ENCODE measurements at regions of chr11 and their contacts with region 1.

Region 1: DNA sequence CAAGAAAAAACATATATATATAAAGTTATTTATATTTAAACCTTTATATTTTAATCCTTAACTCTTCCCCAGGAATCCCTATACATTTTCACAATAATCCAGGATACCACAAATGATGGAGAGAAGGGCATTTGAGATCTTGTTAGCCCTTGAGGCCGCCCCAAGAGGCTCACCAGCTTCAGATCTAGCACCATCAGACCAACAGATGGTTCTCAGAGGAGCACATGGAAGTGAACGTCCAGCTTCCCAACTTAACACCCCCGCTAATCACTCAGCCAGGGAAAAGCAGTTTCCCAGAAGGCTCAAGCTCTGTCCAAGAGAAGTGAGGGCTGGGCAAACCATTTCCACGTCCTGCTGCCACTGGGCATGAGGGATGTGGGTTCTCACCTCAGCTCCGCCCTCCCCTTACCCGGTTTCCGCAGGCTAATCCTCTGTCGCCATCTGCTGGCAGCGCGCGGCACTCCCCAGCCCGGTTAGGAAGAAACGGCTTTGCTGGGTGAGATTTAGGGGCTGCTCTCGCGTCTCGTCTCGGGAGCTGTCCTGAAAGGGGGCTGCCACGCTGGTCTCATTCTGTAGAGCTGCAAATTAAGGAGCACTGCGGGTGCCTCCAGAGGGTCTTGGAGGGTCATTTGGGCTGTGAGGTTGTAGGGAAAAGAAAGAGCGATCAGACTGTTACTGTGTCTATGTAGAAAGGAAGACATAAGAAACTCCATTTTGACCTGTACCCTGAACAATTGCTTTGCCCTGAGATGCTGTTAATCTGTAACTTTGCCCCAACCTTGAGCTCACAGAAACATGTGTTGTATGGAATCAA is 6.8 kb upstream of the FAM111A start:
- DNase-seq: peak; percentile 91
- H3K4me3 ChIP-seq: no peak overlapping the region
- H3K27ac ChIP-seq: no peak overlapping the region
- H3K4me1 ChIP-seq: no peaks in the 10 kb centered on the region
- H3K27me3 ChIP-seq: no peaks in the 10 kb centered on the region
- CTCF ChIP-seq: peak; percentile 99

Region 2: DNA sequence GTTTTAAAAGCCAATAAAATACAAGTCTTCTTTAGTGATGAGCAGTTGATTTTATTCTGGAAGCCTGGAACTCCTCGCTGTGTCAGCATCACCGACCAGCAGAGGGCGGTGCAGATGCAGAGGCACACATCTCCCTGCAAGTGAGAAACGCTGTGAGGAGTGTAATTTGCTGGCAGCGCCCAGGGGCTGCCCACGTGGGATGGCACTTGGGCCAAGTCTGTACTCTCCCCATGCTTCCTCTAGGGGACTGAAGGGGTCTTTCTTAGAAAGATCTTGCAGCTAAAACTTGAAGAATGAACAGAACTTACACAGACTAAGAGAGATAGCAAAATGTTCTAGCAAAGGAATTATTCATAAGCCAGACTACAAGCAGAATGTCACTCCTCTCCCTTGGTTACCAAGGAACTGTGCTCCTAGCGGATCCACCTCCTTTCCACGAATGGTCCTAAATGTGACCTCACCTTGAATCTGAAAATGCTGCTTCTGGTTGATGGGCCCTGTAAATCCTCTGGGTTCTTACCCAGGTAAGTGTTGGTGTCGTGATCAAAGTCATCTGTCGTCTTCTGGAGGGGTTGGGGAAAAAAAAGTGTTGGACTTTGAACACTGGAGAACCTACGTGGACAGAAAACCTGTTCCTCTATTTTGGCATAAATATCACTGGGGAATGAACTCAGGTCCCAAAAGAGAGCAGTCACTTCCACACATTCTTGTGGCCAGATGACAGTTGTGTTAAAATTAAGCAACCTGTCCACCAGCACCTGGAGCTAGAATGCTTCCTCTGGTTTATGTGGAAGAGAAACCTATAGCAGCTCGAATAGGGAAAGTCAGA is 481.6 kb before region 1 on chr11:
- CTCF ChIA-PET with region 1: interaction called, 6 read pairs
- POLR2A ChIA-PET with region 1: no interaction called
- intact Hi-C with region 1: loop called (anchors 5 kb)
- DNase-seq: peak; percentile 91
- H3K4me3 ChIP-seq: no peak overlapping the region
- H3K27ac ChIP-seq: no peak overlapping the region
- H3K4me1 ChIP-seq: no peaks in the 10 kb centered on the region
- H3K27me3 ChIP-seq: no peaks in the 10 kb centered on the region
- CTCF ChIP-seq: peak; percentile 98

Region 3: DNA sequence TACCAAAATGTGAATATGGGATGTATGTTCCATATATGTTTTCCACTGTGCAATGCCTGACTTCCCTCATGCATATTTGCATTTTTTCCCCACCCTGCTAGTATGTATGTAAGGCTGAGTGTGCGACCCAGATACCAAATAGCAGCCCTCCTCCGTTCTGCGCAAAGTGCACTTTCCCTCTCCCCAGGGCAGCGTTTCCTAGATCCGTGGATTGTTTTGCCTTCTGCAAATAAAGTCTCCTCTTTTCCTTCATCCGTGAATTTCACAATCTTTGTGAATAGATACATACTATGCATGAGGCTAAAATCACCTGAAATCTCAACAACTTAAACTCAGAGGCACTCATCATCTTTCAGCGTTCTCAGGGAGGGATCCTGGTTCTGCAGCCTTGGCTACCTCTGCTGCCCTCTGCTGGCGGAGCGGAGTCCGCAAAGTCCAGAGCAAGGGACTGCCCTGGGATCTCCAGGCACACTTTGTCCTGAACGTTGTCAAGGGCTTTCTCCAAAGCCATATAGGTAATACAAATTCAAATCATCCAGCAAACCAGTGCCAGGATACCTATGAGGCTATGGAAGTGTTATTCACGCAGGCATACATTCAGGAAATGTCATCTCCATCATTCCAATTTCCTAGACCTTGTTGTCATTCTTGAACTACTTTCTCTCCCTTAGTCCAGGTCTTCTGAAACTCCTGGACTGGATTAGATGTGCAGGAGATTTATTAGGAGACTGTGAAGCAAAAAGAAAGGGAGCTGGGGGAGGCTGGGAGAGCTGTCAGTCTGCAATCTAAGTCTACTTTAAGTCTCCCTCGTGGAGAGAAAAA is 460.3 kb before region 1 on chr11:
- CTCF ChIA-PET with region 1: no interaction called
- POLR2A ChIA-PET with region 1: no interaction called
- intact Hi-C with region 1: no loop called
- DNase-seq: peak; percentile 75
- H3K4me3 ChIP-seq: no peak overlapping the region
- H3K27ac ChIP-seq: no peak overlapping the region
- H3K4me1 ChIP-seq: no peaks in the 10 kb centered on the region
- H3K27me3 ChIP-seq: no peaks in the 10 kb centered on the region
- CTCF ChIP-seq: peak; percentile 99

Region 4: DNA sequence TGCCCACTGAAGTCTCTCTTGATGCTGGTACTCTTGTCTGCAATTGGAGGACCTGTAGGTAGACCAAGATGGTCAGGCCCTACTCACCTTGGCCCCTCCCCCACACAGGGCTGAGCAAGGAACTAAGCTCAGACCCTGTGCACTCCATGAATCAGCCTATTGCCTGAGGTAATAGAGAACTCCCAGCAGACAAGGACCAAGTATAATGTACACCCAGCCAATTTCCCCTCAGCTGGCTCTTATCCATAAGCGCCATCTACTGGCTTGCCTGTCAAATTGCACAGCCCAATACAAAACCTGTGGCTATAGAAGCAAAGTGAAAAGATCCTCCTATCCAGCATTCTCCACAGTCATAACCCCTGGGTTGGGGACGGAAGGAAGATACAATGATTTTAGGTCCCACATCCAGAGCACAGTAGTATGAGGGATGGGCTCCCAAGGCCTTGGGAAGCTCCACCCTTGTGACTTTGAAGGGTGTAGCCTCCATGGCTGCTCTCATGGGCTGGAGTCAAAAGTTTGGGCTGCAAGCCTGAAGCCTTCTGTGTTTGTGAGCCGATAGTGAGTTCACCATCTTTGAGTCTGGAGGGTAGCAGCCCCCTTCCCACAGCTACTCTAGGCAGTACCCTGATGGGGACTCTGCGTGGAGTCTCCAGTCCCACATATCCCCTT is 347.4 kb before region 1 on chr11:
- CTCF ChIA-PET with region 1: no interaction called
- POLR2A ChIA-PET with region 1: no interaction called
- intact Hi-C with region 1: loop called (anchors 10 kb)
- DNase-seq: peak; percentile 78
- H3K4me3 ChIP-seq: no peak overlapping the region
- H3K27ac ChIP-seq: no peak overlapping the region
- H3K4me1 ChIP-seq: no peaks in the 10 kb centered on the region
- H3K27me3 ChIP-seq: no peaks in the 10 kb centered on the region
- CTCF ChIP-seq: peak; percentile 98

Region 5: GRCh38 chr11:58958500-58958899 is 177.4 kb before region 1 on chr11:
- CTCF ChIA-PET with region 1: interaction called, 4 read pairs
- POLR2A ChIA-PET with region 1: no interaction called
- intact Hi-C with region 1: loop called (anchors 10 kb)
- DNase-seq: peak; percentile 63
- H3K4me3 ChIP-seq: no peak overlapping the region
- H3K27ac ChIP-seq: no peak overlapping the region
- H3K4me1 ChIP-seq: no peaks in the 10 kb centered on the region
- H3K27me3 ChIP-seq: peaks cover 14% of the 10 kb centered on the region
- CTCF ChIP-seq: peak; percentile 62

Region 6: GRCh38 chr11:59053387-59053786 is 82.5 kb before region 1 on chr11:
- CTCF ChIA-PET with region 1: interaction called, 5 read pairs
- POLR2A ChIA-PET with region 1: no interaction called
- intact Hi-C with region 1: loop called (anchors 1 kb)
- DNase-seq: peak; percentile 77
- H3K4me3 ChIP-seq: no peak overlapping the region
- H3K27ac ChIP-seq: no peak overlapping the region
- H3K4me1 ChIP-seq: no peaks in the 10 kb centered on the region
- H3K27me3 ChIP-seq: peaks cover 23% of the 10 kb centered on the region
- CTCF ChIP-seq: peak; percentile 74

Region 7: DNA sequence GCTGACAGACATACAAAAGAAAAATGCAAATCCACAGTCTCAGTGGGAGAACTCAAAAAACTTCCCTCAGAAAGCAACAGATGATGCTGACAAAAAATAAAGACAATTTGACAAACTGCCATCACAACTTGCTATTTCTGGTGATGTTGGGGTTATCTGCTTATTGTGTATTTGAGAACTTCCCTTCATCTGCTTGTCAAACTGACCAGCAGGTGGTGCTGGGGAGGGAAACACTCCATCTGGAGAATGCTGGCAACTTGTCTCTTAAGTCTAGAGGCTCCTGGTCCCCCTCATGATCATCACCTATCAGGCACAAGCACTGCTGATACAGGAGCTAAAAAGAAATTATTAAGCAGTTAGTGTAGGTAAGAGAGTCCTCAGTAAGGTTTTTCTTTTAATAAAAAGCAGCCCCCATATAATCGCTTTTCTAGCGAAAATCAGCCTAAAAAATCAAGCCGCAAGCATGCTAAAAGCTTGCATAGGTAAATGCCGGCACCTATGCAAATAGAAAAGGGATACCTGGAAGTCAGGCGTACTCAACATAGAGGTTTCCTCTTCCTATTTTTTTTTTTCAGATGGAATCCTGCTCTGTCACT is 38.6 kb before region 1 on chr11:
- CTCF ChIA-PET with region 1: interaction called, 14 read pairs
- POLR2A ChIA-PET with region 1: no interaction called
- intact Hi-C with region 1: loop called (anchors 1 kb)
- DNase-seq: peak; percentile 78
- H3K4me3 ChIP-seq: no peak overlapping the region
- H3K27ac ChIP-seq: no peak overlapping the region
- H3K4me1 ChIP-seq: no peaks in the 10 kb centered on the region
- H3K27me3 ChIP-seq: peaks cover 24% of the 10 kb centered on the region
- CTCF ChIP-seq: peak; percentile 72

Region 8: DNA sequence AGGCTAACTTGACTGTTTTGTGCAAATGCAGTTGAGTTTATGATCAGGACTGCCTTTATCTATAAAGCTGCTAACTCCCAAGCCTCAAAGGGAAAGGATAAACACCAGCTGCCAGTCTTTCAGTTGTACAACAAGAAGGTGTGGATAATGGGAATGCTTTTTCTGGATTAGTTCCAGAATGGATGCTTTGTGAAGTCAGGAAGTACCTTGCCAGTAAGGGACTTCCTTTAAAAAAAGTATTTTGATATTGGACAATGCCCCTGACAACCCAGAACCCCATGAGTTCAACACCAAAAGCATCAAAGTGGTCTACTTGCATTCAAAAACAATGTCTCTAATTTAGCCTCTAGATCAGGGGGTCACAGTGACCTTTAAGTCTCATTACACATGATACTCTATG is 258.3 kb after region 1 on chr11:
- CTCF ChIA-PET with region 1: no interaction called
- POLR2A ChIA-PET with region 1: no interaction called
- intact Hi-C with region 1: no loop called
- DNase-seq: no peak
- H3K4me3 ChIP-seq: no peak overlapping the region
- H3K27ac ChIP-seq: no peak overlapping the region
- H3K4me1 ChIP-seq: no peaks in the 10 kb centered on the region
- H3K27me3 ChIP-seq: no peaks in the 10 kb centered on the region
- CTCF ChIP-seq: no peak

Region 9: GRCh38 chr11:60513496-60514460 is 1377.9 kb after region 1 on chr11:
- CTCF ChIA-PET with region 1: no interaction called
- POLR2A ChIA-PET with region 1: no interaction called
- intact Hi-C with region 1: no loop called
- DNase-seq: no peak
- H3K4me3 ChIP-seq: no peak overlapping the region
- H3K27ac ChIP-seq: no peak overlapping the region
- H3K4me1 ChIP-seq: no peaks in the 10 kb centered on the region
- H3K27me3 ChIP-seq: peaks cover 21% of the 10 kb centered on the region
- CTCF ChIP-seq: no peak

Measured in A673 (cell line).